Posterior cingulate gyrus (tissue), 11 donors: ENCODE measurements at regions of chr6 and their contacts with region 1.

Region 1: DNA sequence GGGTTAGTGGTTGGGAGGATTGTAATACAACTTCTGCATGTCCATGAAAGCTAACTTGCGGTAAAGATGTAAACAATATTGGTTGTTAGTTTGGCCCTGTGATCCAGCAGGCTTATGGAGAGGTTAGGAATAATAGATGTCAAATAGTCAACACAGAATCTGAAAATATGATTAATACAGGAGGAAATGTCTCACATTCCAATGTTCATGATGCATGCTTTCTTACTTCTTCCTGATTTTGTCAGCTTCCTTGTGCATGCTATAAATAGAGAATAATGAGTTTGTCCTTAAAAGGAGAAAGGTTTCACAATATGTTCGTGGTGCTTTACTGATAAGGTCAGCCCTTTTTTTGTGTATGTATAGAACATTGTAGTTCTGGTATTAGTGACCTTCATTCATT is 136.7 kb downstream of the MMUT start:
- DNase-seq: no peak

Region 2: DNA sequence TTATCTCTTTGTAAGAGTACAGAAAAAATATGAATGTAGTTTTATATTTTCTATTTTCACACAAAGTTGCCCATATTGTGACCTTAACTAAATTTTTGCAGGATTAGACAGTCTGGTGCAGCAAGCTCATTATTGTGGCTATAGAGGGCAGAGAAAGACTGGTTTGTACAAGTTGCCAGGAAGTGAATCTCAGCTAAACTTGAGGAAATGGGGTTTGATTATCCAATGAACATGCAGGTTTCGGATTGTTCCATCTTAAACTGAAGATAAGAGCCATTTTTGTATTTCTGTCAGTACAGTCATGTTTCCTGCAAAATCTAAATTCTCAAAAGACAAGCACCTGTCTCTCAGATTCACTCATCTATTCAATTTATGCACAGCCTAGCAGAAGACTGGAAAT is 254.2 kb before region 1 on chr6:
- intact Hi-C with region 1: loop called (anchors 5 kb)
- DNase-seq: no peak